AG04450 (cell line): ENCODE measurements at regions of chr1 and their contacts with region 1.

Region 1: GRCh38 chr1:2412519-2413233 is at the start of gene PEX10:
- DNase-seq: peak; percentile 80
- H3K4me3 ChIP-seq: peak within 1 kb of the TSS; percentile 87
- H3K27ac ChIP-seq: peak within 1 kb of the TSS; percentile 31
- H3K27me3 ChIP-seq: no peaks in the 10 kb centered on the region
- CTCF ChIP-seq: no peak
- polyA plus RNA-seq, gene PEX10: 11.9 and 14.4 TPM in 2 replicates

Region 2: GRCh38 chr1:2546515-2547209 is 134.0 kb after region 1 on chr1:
- CTCF ChIA-PET with region 1: interaction called, 40 read pairs
- POLR2A ChIA-PET with region 1: no interaction called
- DNase-seq: no peak
- H3K4me3 ChIP-seq: peak overlapping the region; percentile 58
- H3K27ac ChIP-seq: no peak overlapping the region
- H3K27me3 ChIP-seq: no peaks in the 10 kb centered on the region
- CTCF ChIP-seq: no peak

Region 3: DNA sequence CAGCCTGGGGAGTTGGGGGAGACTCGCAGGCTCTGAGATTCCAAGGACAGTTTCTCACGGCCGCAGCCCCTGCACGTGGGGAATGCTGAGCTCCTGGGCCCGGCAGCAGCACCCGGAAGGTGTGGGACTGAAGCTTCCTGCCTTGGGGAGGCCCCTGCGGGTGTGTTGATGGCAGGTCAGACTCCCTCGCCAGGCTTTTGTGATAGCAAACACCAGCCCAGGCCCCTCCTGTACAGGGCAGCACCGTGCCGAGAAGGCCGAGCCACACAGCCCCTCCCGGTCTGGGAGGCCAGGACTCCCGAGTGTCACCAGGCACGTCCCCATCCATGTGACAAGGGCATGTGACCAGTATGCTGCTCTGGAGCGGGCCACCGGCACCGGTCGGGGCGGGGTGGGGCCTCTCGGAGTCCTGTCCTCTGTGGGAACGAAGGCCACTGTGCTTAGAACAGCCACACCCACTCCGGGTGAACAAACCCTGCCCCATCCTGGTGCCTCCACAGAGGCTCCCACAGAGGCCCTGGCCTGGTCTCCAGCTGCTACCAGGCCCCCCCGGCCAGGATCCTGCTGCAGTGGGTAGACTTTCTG is 1010.7 kb after region 1 on chr1:
- CTCF ChIA-PET with region 1: interaction called, 14 read pairs
- POLR2A ChIA-PET with region 1: no interaction called
- DNase-seq: no peak
- H3K4me3 ChIP-seq: no peak overlapping the region
- H3K27ac ChIP-seq: no peak overlapping the region
- H3K27me3 ChIP-seq: peaks cover 5% of the 10 kb centered on the region
- CTCF ChIP-seq: no peak